AG04450 (cell line): ENCODE measurements at regions of chr4 and their contacts with region 1.

Region 1: DNA sequence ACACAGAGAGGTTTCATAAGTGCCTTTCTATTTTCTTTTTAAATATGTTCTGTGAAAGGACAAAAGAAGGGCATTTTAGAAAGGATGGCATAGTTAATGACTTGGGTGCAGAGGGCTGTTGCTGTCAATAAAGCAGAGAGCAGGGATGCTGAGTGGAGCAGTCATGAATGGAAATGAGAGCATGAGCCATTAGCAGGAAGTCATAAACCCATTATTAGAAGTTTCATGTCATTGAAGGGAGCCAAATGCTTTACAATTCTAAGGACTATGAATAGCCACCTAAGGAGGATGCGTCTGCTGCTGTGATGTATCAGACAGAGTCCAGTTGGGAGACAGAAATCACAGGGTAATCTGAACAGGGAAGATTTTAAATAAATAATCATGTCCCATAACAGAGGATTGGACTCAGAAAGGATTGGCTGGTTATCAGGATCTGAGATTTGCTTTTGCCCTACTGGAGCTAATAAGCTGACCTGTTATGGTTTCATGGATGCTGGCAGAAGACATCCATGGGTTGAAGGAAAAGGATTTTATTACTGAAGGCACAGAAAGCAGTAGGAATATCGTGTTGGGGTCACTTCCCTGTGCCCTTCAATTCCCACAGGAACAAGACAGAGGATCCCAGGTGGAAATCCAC is 47.5 kb upstream of the WDR19 start:
- DNase-seq: no peak
- H3K4me3 ChIP-seq: no peak overlapping the region
- H3K27ac ChIP-seq: peak overlapping the region; percentile 41
- H3K27me3 ChIP-seq: no peaks in the 10 kb centered on the region
- CTCF ChIP-seq: no peak

Region 2: DNA sequence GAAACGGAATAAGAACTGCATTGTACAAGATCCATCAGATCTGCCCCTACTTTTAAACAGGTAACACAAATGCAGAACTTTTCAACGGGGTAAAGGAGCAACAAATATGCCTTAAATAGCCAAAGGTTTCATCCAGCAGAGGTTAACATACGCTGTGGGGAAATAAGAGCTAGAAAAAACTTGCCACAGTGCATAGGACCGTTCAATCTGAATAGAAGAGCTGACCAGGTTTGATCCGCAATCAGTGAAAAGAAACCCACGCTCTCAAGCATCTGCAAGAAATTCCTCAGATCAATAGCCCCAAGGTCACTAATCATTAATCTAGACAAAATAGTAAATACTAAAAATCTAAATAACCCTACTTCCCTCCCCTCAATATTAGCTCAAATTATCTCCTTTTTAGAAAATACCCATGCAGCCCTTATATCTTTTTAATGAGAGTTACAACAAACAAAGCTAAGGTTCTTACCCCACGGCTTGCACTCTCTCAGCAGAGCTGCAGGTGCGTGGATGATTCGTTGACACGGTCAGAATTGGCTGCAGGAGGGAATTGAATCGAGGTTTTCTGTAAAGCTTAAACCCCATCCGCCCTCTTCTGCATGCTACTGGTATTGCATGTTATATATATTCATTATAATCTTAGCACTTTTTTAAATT is 352.2 kb before region 1 on chr4 and contains the start of gene TLR10:
- CTCF ChIA-PET with region 1: interaction called, 13 read pairs
- POLR2A ChIA-PET with region 1: no interaction called
- DNase-seq: peak; percentile 16
- H3K4me3 ChIP-seq: no peak within 1 kb of the TSS
- H3K27ac ChIP-seq: no peak within 1 kb of the TSS
- H3K27me3 ChIP-seq: peaks cover 4% of the 10 kb centered on the region
- CTCF ChIP-seq: peak; percentile 64
- polyA plus RNA-seq, gene TLR10: not detected in 2 replicates

Region 3: GRCh38 chr4:38902695-38903094 is 232.1 kb before region 1 on chr4:
- CTCF ChIA-PET with region 1: interaction called, 32 read pairs
- POLR2A ChIA-PET with region 1: no interaction called
- DNase-seq: no peak
- H3K4me3 ChIP-seq: no peak overlapping the region
- H3K27ac ChIP-seq: no peak overlapping the region
- H3K27me3 ChIP-seq: no peaks in the 10 kb centered on the region
- CTCF ChIP-seq: no peak

Region 4: GRCh38 chr4:38914854-38915253 is 219.9 kb before region 1 on chr4:
- CTCF ChIA-PET with region 1: interaction called, 11 read pairs
- POLR2A ChIA-PET with region 1: interaction called, 3 read pairs
- DNase-seq: no peak
- H3K4me3 ChIP-seq: no peak overlapping the region
- H3K27ac ChIP-seq: no peak overlapping the region
- H3K27me3 ChIP-seq: no peaks in the 10 kb centered on the region
- CTCF ChIP-seq: no peak

Region 5: GRCh38 chr4:39146211-39146610 is 11.4 kb after region 1 on chr4:
- CTCF ChIA-PET with region 1: interaction called, 18 read pairs
- POLR2A ChIA-PET with region 1: no interaction called
- DNase-seq: no peak
- H3K4me3 ChIP-seq: no peak overlapping the region
- H3K27ac ChIP-seq: no peak overlapping the region
- H3K27me3 ChIP-seq: no peaks in the 10 kb centered on the region
- CTCF ChIP-seq: no peak